HepG2 (cell line): ENCODE measurements at regions of chr10 and their contacts with region 1.

Region 1: DNA sequence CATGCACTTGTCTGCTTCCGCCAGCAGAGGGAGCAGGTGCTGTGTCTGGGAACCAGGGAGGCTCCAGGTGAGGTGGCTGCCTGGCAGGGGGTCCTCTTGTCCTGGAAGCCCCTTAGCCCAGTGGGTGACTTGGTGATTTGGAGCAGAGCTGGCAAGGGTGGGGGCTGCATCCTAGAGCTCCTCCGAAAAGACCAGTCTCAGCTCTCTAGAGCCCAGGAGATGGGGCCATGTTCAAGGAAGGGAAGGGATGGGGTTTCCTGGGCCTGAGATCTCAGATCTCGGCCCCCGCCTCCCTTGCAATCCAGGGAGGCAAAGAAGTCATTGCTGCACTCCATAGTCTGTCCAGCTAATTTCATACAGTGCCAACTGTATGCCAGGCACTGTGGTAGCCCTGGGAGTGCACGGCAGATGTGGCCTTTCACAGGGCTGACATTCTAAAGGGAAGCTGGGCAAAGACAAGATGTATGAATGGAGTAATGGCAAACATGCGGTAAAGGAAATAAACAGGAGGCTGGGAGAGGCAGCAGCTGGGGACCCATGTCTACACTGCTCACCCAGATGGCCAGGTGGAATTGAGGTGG is 20.4 kb upstream of the SFRP5 start:
- DNase-seq: peak; percentile 48
- ATAC-seq: no peak; the same call in 1 of the 3 replicates
- H3K4me3 ChIP-seq: no peak overlapping the region
- H3K27ac ChIP-seq: no peak overlapping the region
- H3K4me1 ChIP-seq: peaks cover 13% of the 10 kb centered on the region
- H3K27me3 ChIP-seq: peaks cover 2 to 11% of the 10 kb centered on the region in 2 experiments; a peak in 2 of 5 replicates
- CTCF ChIP-seq: peak; percentile 93
- EP300 ChIP-seq: no peak
- POLR2A ChIP-seq: no peak
- RAD21 ChIP-seq: peak; percentile 76

Region 2: DNA sequence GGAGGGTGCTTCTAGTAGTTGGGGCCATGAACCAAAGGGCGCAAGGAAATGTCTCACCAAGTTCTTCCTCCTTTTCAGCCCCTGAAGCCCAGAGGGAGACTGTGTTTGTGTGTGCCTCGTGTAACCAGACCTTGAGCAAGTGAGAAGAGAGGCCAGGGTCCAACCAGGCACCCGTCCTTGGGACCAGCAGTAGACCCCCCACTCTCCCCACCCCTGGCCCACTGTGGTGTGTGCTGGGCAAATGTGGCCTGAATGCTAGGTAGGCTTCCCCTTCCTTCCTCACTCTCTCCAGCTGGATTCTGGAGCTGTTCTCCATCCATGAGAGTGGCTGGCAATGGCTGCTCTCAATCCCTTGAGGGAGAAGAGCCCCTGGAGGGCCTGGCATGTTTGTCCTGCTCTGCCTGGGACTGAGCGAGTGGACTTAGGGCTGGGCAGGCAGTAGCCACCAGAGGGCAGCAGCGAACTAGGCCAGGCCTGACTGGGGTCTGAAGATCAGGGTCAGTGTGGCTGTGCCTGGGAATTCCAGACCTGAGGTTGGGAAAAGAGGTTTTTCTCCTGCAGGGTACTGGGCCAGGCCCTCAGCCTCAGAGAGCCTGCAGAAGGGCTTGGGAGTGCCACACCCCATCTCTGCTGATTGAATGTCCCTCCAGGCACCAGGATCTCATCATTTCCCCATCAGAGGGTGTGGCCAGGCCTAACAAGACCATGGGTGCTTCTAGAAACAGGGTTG is 32.9 kb before region 1 on chr10:
- CTCF ChIA-PET with region 1: interaction called, 6 read pairs
- POLR2A ChIA-PET with region 1: interaction called, 3 read pairs
- in situ Hi-C with region 1: loop called (anchors 5 kb)
- intact Hi-C with region 1: loop called (anchors 2 kb)
- DNase-seq: peak; percentile 79
- ATAC-seq: peak; percentile 94
- H3K4me3 ChIP-seq: no peak overlapping the region
- H3K27ac ChIP-seq: peak overlapping the region; percentile 18
- H3K4me1 ChIP-seq: peaks cover 40% of the 10 kb centered on the region
- H3K27me3 ChIP-seq: no peaks in the 10 kb centered on the region
- CTCF ChIP-seq: peak; percentile 99
- EP300 ChIP-seq: no peak
- POLR2A ChIP-seq: no peak
- RAD21 ChIP-seq: peak; percentile 96

Region 3: DNA sequence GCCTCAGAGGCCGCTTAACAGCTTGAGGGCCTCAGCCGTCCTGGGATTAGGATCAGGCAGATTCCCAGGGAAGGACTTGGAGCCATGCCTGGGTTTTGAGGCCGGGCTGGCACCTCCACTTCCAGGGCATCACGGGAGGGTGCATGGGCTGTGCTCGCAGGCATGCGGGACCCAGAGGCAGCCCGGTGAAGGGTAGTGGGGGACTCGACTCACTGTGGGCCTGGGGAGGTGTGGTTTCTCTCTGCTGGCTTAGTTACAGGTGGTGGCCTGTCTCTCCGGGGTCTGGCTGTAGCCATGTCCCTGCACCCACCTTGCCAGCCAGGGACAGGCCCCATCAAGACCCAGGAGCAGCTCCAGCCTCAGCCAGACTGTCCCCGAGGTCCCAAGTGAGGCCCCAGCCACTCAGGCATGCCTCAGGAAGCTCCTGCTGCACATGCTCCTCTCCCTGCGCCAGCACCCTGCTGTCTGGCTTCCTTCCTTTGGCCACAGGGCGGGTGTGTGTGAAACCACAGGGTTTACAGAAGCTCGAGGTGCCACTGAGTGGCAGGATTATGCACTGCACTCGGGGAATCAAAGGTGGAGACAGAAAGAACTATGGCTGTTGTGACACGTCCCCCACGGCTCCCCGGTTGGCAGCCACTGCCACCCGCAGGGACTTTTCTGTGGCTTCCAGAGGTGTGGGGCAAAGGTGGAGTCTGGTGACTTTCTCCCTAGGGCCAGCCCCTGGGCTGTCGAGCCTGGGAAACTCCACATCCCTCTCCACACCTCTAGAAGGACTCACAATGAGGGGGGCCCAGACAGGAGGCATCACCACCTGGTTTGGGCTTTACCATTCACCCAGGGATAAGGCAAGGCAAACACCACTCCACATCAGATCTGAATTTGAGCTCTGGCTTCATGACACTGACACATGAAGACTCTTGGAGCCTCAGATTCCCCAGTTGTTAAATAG is 77.1 kb after region 1 on chr10:
- CTCF ChIA-PET with region 1: interaction called, 25 read pairs
- POLR2A ChIA-PET with region 1: no interaction called
- in situ Hi-C with region 1: loop called (anchors 5 kb)
- intact Hi-C with region 1: loop called (anchors 1 kb)
- DNase-seq: peak; percentile 79
- ATAC-seq: peak; percentile 99
- H3K4me3 ChIP-seq: peak overlapping the region in 1 of 3 experiments; percentile 37; a peak in 1 of 6 replicates
- H3K27ac ChIP-seq: no peak overlapping the region
- H3K4me1 ChIP-seq: peaks cover 14% of the 10 kb centered on the region
- H3K27me3 ChIP-seq: peaks cover 11 to 79% of the 10 kb centered on the region in 2 experiments
- CTCF ChIP-seq: peak; percentile 92
- EP300 ChIP-seq: no peak
- POLR2A ChIP-seq: no peak
- RAD21 ChIP-seq: peak; percentile 94

Region 4: GRCh38 chr10:98045785-98046389 is 253.7 kb after region 1 on chr10:
- CTCF ChIA-PET with region 1: no interaction called
- POLR2A ChIA-PET with region 1: no interaction called
- in situ Hi-C with region 1: no loop called
- intact Hi-C with region 1: loop called (anchors 10 kb)
- DNase-seq: peak; percentile 52
- ATAC-seq: peak; percentile 85
- H3K4me3 ChIP-seq: no peak overlapping the region
- H3K27ac ChIP-seq: no peak overlapping the region
- H3K4me1 ChIP-seq: no peaks in the 10 kb centered on the region
- H3K27me3 ChIP-seq: peaks cover 0 to 19% of the 10 kb centered on the region in 2 experiments; a peak in 3 of 5 replicates
- CTCF ChIP-seq: peak; percentile 80
- EP300 ChIP-seq: no peak
- POLR2A ChIP-seq: no peak
- RAD21 ChIP-seq: no peak